ENCODE measurements at regions of chr16 and their contacts with region 1.

Region 1: GRCh38 chr16:72467157-72467759 is 295.3 kb upstream of the PMFBP1 start:
- DNase-seq: peak; percentile 26
- H3K4me3 Mint-ChIP-seq: no peak overlapping the region
- H3K27ac Mint-ChIP-seq: no peak overlapping the region
- H3K4me1 Mint-ChIP-seq: no peaks in the 10 kb centered on the region
- H3K27me3 Mint-ChIP-seq: no peaks in the 10 kb centered on the region
- CTCF ChIP-seq: peak; percentile 39

Region 2: GRCh38 chr16:72124761-72125634 is 342.3 kb before region 1 on chr16:
- CTCF ChIA-PET with region 1: interaction called, 12 read pairs
- intact Hi-C with region 1: loop called (anchors 2 kb)
- DNase-seq: peak; percentile 84
- H3K4me3 Mint-ChIP-seq: no peak overlapping the region
- H3K27ac Mint-ChIP-seq: no peak overlapping the region
- H3K4me1 Mint-ChIP-seq: peaks cover 18% of the 10 kb centered on the region
- H3K27me3 Mint-ChIP-seq: no peaks in the 10 kb centered on the region
- CTCF ChIP-seq: peak; percentile 87

Region 3: GRCh38 chr16:72241930-72242329 is 225.3 kb before region 1 on chr16:
- CTCF ChIA-PET with region 1: interaction called, 10 read pairs
- intact Hi-C with region 1: loop called (anchors 1 kb)
- DNase-seq: peak; percentile 56
- H3K4me3 Mint-ChIP-seq: no peak overlapping the region
- H3K27ac Mint-ChIP-seq: no peak overlapping the region
- H3K4me1 Mint-ChIP-seq: no peaks in the 10 kb centered on the region
- H3K27me3 Mint-ChIP-seq: no peaks in the 10 kb centered on the region
- CTCF ChIP-seq: peak; percentile 77

Region 4: DNA sequence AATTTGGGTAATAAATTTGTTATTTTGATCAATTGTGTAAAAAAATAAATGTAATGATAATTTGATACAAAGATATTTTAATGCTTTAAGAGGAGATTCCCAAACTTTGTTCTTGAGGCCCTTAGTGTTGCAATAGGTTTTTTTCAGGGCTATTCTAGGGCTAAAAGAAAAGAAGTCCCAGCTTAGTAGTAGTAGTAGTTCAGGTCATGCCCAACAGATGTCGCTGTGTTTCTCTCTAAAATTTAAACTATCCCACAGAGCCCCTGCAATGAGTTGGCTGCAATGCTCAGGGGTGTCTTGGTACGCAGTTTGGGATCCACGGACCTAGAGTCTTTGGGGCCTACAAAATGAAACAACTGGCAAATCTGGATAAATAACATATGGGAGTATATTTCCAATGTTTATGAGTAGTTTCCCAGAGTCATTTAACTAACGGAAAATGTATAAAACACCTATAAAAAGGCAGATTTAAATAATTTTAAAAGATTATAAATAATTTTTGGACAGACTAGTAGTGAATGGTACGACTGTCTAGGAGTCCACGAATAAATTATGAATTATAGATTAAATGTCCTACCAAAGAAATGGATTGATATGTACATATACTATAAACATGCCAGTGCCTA is 66.9 kb before region 1 on chr16:
- CTCF ChIA-PET with region 1: interaction called, 24 read pairs
- intact Hi-C with region 1: loop called (anchors 1 kb)
- DNase-seq: peak; percentile 55
- H3K4me3 Mint-ChIP-seq: no peak overlapping the region
- H3K27ac Mint-ChIP-seq: no peak overlapping the region
- H3K4me1 Mint-ChIP-seq: no peaks in the 10 kb centered on the region
- H3K27me3 Mint-ChIP-seq: no peaks in the 10 kb centered on the region
- CTCF ChIP-seq: peak; percentile 71

Region 5: GRCh38 chr16:72442385-72443158 is 24.7 kb before region 1 on chr16:
- CTCF ChIA-PET with region 1: no interaction called
- intact Hi-C with region 1: no loop called
- DNase-seq: no peak
- H3K4me3 Mint-ChIP-seq: no peak overlapping the region
- H3K27ac Mint-ChIP-seq: no peak overlapping the region
- H3K4me1 Mint-ChIP-seq: no peaks in the 10 kb centered on the region
- H3K27me3 Mint-ChIP-seq: no peaks in the 10 kb centered on the region
- CTCF ChIP-seq: no peak